CD8-positive, alpha-beta T cell (primary cell): ENCODE measurements at regions of chrX and their contacts with region 1.

Region 1: DNA sequence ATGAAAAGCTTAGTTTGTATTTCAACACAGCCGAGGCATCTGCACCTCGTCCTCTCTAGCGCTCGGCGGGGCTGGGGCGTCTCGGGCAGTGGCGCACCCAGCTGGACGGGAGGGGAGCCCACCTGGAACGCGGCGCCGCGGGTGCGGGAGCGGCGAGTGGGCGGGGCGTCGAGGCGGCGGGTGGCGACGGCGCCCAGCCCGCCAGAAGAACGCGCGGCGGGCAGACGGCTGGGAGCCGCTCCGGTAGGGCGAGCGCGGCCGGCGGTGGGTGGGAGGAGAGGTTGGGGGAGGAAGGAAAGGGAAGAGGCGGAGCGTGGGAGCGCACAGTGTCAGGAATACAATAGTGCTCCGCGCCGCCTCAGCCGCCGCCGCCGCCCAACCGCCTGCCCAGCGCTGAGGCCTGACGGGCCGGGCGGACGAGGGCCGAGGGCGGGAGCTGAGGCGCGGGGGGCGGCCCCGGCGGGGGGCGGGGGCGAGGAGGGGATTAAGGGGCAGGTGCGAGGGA is at the start of gene JADE3:
- DNase-seq: peak in 5 of 9 experiments; percentile 11 to 49 (median 45)
- ATAC-seq: peak; percentile 64
- H3K4me3 ChIP-seq: peak within 1 kb of the TSS; percentile 45 to 46
- H3K4me3 Mint-ChIP-seq: peak within 1 kb of the TSS; percentile 78
- H3K27ac ChIP-seq: no peak within 1 kb of the TSS
- H3K27ac Mint-ChIP-seq: no peak within 1 kb of the TSS
- H3K4me1 ChIP-seq: peaks cover 6% of the 10 kb centered on the region
- H3K4me1 Mint-ChIP-seq: peaks cover 7% of the 10 kb centered on the region
- H3K27me3 ChIP-seq: peaks cover 9 to 12% of the 10 kb centered on the region in 2 experiments
- H3K27me3 Mint-ChIP-seq: peaks cover 30% of the 10 kb centered on the region
- CTCF ChIP-seq: no peak
- total RNA-seq, gene JADE3: not detected

Region 2: GRCh38 chrX:46978341-46979291 is 66.5 kb after region 1 on chrX:
- CTCF ChIA-PET with region 1: no interaction called
- POLR2A ChIA-PET with region 1: no interaction called
- intact Hi-C with region 1: loop called in 1 of 2 experiments (anchors 5 kb)
- DNase-seq: peak; percentile 23 to 75 (median 67)
- ATAC-seq: peak; percentile 67
- H3K4me3 ChIP-seq: no peak overlapping the region
- H3K4me3 Mint-ChIP-seq: no peak overlapping the region
- H3K27ac ChIP-seq: no peak overlapping the region
- H3K27ac Mint-ChIP-seq: no peak overlapping the region
- H3K4me1 ChIP-seq: no peaks in the 10 kb centered on the region
- H3K4me1 Mint-ChIP-seq: no peaks in the 10 kb centered on the region
- H3K27me3 ChIP-seq: no peaks in the 10 kb centered on the region
- H3K27me3 Mint-ChIP-seq: no peaks in the 10 kb centered on the region
- CTCF ChIP-seq: peak; percentile 57